ENCODE measurements at regions of chr9 and their contacts with region 1.

Region 1: GRCh38 chr9:76302947-76303940 is 91.0 kb downstream of the RFK start:
- H3K4me3 ChIP-seq: no peak overlapping the region
- H3K27ac ChIP-seq: no peak overlapping the region
- H3K4me1 ChIP-seq: no peaks in the 10 kb centered on the region
- CTCF ChIP-seq: no peak

Region 2: GRCh38 chr9:76292246-76292645 is 11.0 kb before region 1 on chr9:
- CTCF ChIA-PET with region 1: interaction called, 10 read pairs
- POLR2A ChIA-PET with region 1: no interaction called
- H3K4me3 ChIP-seq: no peak overlapping the region
- H3K27ac ChIP-seq: no peak overlapping the region
- H3K4me1 ChIP-seq: no peaks in the 10 kb centered on the region
- CTCF ChIP-seq: no peak

Measured in HEK293 (cell line).